Heart left ventricle (tissue), 16 donors: ENCODE measurements at regions of chr18 and their contacts with region 1.

Region 1: GRCh38 chr18:6315517-6316331 is 99.0 kb downstream of the L3MBTL4 start:
- DNase-seq: no peak
- ATAC-seq: peak in 1 of 4 donors; percentile 29
- H3K4me3 ChIP-seq: peak overlapping the region in 1 of 12 donors; percentile 13
- H3K27ac ChIP-seq: no peak overlapping the region
- H3K4me1 ChIP-seq: peaks cover 0 to 2% (median 0%) of the 10 kb centered on the region in 12 donors
- H3K27me3 ChIP-seq: no peaks in the 10 kb centered on the region
- CTCF ChIP-seq: peak in 2 of 12 donors; percentile 13 to 37
- POLR2A ChIP-seq: no peak

Region 2: DNA sequence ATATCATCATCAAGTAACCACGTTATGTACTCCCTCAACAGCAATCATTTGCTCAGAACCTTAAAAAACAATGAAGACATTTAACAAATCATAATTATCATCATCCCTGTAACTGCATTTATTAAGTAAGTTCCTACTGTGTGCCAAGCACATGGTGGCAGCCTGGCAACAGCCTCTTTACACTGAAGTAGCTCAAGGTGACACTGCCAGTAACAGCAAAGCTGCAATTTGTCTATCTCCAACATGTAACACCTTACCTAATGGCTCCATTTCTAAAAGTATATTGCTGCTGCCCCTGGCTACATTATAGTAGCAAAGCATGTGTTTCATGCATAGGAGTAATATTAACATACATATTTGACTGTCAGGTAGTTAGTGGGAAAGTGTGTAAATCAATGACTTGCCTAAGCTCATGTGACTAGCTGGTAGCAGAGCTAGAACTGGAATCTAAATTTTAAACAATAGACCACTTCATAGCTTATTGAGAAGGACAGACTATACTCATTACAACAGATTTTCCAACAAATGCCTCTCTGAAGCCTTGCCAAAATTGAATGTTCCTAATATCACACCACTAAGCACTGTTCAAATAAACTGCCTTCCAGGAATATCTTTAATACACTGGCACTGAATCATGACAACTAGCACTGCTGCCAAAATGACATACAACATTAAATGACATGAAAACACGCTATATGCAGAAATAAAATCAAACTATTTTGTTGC is 12.3 kb after region 1 on chr18:
- intact Hi-C with region 1: loop called in 1 of 10 experiments (anchors 2 kb)
- DNase-seq: no peak
- ATAC-seq: peak in 3 of 4 donors; percentile 58 to 90 (median 88)
- H3K4me3 ChIP-seq: no peak overlapping the region
- H3K27ac ChIP-seq: peak overlapping the region in 3 of 12 donors; percentile 40 to 51 (median 44)
- H3K4me1 ChIP-seq: peaks cover 0 to 7% (median 0%) of the 10 kb centered on the region in 12 donors
- H3K27me3 ChIP-seq: no peaks in the 10 kb centered on the region
- CTCF ChIP-seq: no peak
- POLR2A ChIP-seq: no peak

Region 3: DNA sequence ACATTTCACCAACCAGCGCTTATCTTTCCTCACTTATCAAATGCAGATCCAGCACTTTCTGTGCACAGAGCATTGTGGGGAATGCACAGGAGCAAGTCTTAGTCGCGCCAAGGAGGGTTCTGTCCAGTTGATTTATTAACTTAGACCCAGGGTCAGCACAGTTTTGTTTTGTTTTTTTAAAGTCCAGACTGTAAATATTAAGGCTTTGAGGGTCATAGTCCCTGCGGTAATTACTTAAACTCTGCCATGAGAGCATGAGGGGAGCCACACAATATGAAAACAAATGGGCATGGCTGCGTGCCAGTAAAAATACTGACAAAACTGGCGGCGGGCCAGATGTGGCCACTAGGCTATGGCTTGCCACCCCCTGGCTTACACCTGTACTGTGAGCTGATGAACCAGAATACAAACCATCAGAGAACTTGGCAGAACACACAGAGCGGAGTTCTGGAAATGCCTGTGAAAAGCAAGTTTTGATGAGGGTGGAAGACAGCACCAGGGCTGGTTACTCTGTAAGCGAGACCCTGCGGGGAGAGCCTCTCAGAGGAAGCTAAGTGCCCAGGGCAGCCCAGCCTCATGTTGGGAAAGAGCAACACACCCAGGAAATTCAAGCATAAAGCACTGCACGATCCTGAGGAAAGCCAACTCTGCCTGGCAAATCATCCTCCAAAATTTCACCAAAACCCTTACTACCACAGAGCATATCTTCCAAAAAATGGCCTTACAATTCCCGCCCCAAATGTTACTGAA is 55.3 kb after region 1 on chr18:
- intact Hi-C with region 1: loop called in 1 of 10 experiments (anchors 10 kb)
- DNase-seq: no peak
- ATAC-seq: no peak
- H3K4me3 ChIP-seq: no peak overlapping the region
- H3K27ac ChIP-seq: no peak overlapping the region
- H3K4me1 ChIP-seq: peaks cover 0 to 5% (median 0%) of the 10 kb centered on the region in 12 donors
- H3K27me3 ChIP-seq: no peaks in the 10 kb centered on the region
- CTCF ChIP-seq: no peak
- POLR2A ChIP-seq: no peak